ENCODE measurements at regions of chr21 and their contacts with region 1.

Region 1: GRCh38 chr21:41186662-41187539 is 18.9 kb downstream of the BACE2 start:
- DNase-seq: no peak
- H3K4me3 ChIP-seq: no peak overlapping the region
- CTCF ChIP-seq: no peak

Region 2: DNA sequence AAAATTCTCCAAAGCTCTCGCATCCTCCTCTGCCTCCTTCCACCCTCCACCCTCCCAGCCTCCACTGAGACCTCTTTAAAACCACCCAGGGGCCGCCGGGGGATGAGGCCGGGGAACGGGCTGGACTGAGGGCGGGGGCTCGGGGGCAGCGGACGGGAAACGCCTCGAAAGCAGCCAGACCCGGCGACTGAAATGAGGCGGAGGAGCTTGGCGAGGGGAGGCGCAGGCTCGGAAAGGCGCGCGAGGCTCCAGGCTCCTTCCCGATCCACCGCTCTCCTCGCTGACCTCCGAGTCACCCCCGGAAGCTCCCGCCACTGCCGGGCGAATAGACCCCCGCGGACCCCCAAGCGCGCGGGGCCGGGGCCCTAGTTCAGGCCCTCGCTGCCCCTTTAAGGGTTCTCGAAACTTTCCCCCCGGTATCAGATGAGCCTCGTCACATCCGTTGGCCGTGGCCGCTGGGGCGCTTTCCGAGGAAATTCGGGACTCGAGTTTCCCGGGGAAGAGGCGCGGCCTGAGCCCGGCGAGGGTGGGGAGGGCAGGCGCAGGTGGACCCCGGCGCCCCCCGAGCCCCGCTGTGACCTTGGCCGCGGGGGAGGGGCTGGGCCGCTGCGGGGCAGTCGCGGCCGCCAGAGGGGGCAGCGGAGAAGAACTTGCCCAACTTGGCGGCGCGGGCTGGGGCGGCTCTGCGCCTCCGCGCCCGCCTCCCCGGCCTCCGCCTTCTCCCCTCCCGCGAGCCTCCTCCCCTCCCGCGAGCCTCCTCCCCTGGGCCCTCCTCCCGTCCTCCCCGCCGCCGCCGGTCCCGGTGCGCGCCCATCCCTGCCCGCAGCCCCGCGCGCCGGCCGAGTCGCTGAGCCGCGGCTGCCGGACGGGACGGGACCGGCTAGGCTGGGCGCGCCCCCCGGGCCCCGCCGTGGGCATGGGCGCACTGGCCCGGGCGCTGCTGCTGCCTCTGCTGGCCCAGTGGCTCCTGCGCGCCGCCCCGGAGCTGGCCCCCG is 19.3 kb before region 1 on chr21 and contains the start of gene BACE2:
- CTCF ChIA-PET with region 1: interaction called, 59 read pairs
- POLR2A ChIA-PET with region 1: no interaction called
- DNase-seq: no peak
- H3K4me3 ChIP-seq: peak within 1 kb of the TSS; percentile 68
- CTCF ChIP-seq: peak; percentile 70

Region 3: GRCh38 chr21:41247561-41248284 is 60.8 kb after region 1 on chr21:
- CTCF ChIA-PET with region 1: no interaction called
- POLR2A ChIA-PET with region 1: no interaction called
- DNase-seq: no peak
- H3K4me3 ChIP-seq: no peak overlapping the region
- CTCF ChIP-seq: no peak

Region 4: GRCh38 chr21:41269535-41269934 is 82.6 kb after region 1 on chr21:
- CTCF ChIA-PET with region 1: no interaction called
- POLR2A ChIA-PET with region 1: no interaction called
- DNase-seq: no peak
- H3K4me3 ChIP-seq: no peak overlapping the region
- CTCF ChIP-seq: no peak

Measured in AG04449 (cell line).